CD8-positive, alpha-beta T cell (primary cell): ENCODE measurements at regions of chr14 and their contacts with region 1.

Region 1: GRCh38 chr14:24605435-24606190 is 3.9 kb downstream of the GZMH start:
- DNase-seq: peak; percentile 41 to 77 (median 64)
- ATAC-seq: peak; percentile 79
- H3K4me3 ChIP-seq: peak overlapping the region in 1 of 2 experiments; percentile 19
- H3K4me3 Mint-ChIP-seq: no peak overlapping the region
- H3K27ac ChIP-seq: peak overlapping the region in 1 of 2 experiments; percentile 71
- H3K27ac Mint-ChIP-seq: peak overlapping the region; percentile 88
- H3K4me1 ChIP-seq: peaks cover 5% of the 10 kb centered on the region
- H3K4me1 Mint-ChIP-seq: peaks cover 35% of the 10 kb centered on the region
- H3K27me3 ChIP-seq: no peaks in the 10 kb centered on the region
- H3K27me3 Mint-ChIP-seq: peaks cover 7% of the 10 kb centered on the region
- CTCF ChIP-seq: peak; percentile 87

Region 2: DNA sequence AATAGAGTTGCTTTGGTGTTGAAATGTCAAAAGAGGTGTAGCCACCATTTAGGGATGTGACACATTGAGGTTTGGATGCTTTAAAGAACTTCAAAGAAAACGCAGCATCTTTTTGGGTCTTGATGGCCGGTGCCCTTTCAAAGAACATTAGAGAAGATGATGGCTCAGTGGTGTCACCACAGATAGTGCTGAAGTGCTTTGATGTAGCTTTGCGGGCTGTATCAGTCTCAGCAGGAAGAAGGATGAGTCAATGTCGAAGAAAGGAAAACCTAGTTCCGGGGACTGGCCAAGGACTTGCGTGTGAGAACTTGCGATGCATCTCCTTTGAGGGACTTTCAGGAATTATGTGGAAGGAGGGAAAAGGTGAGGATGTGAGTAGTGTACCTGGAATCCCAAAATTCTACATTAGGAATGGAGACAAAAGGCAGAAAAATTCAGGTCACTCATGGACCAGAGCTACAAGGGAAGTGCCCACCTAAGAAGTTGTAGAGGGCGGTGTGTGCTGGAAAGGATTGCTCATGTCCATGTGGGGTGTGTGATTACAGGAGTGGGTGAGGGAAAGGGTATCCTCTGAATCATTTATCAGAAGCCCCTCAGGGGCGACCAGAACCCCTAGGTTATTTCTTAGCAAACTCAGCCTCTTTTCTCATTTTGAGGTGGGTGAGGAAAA is 68.1 kb after region 1 on chr14:
- CTCF ChIA-PET with region 1: interaction called, 12 read pairs
- POLR2A ChIA-PET with region 1: interaction called, 3 read pairs
- intact Hi-C with region 1: no loop called
- DNase-seq: peak; percentile 28 to 93 (median 63)
- ATAC-seq: peak; percentile 73
- H3K4me3 ChIP-seq: peak overlapping the region; percentile 21 to 27
- H3K4me3 Mint-ChIP-seq: peak overlapping the region; percentile 75
- H3K27ac ChIP-seq: peak overlapping the region; percentile 27 to 83
- H3K27ac Mint-ChIP-seq: peak overlapping the region; percentile 94
- H3K4me1 ChIP-seq: peaks cover 34% of the 10 kb centered on the region
- H3K4me1 Mint-ChIP-seq: peaks cover 58% of the 10 kb centered on the region
- H3K27me3 ChIP-seq: no peaks in the 10 kb centered on the region
- H3K27me3 Mint-ChIP-seq: no peaks in the 10 kb centered on the region
- CTCF ChIP-seq: no peak

Region 3: DNA sequence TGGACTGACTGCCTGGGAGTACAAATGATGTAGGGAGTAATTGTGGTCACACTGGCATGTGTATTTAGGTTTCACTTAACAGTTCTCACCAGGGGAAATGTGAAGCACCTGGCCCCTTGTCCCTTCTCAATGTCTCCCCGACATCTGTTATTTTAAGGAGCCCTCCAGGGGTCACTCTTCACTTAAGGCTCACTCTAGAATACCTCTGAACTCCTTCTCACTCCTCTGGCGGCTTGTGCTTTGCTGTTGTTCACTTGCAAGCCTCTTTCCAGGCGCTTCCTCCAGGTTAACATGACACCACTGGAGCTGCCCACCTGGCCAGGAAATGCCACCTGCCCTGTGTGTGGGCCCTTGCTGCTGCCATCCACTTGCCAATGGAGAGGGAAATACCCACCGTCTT is 84.9 kb after region 1 on chr14:
- CTCF ChIA-PET with region 1: interaction called, 5 read pairs
- POLR2A ChIA-PET with region 1: no interaction called
- intact Hi-C with region 1: loop called in 1 of 2 experiments (anchors 5 kb)
- DNase-seq: peak in 2 of 9 experiments; percentile 51 to 66
- ATAC-seq: no peak
- H3K4me3 ChIP-seq: no peak overlapping the region
- H3K4me3 Mint-ChIP-seq: no peak overlapping the region
- H3K27ac ChIP-seq: peak overlapping the region in 1 of 2 experiments; percentile 1
- H3K27ac Mint-ChIP-seq: no peak overlapping the region
- H3K4me1 ChIP-seq: peaks cover 44% of the 10 kb centered on the region
- H3K4me1 Mint-ChIP-seq: peaks cover 24% of the 10 kb centered on the region
- H3K27me3 ChIP-seq: no peaks in the 10 kb centered on the region
- H3K27me3 Mint-ChIP-seq: no peaks in the 10 kb centered on the region
- CTCF ChIP-seq: no peak

Region 4: DNA sequence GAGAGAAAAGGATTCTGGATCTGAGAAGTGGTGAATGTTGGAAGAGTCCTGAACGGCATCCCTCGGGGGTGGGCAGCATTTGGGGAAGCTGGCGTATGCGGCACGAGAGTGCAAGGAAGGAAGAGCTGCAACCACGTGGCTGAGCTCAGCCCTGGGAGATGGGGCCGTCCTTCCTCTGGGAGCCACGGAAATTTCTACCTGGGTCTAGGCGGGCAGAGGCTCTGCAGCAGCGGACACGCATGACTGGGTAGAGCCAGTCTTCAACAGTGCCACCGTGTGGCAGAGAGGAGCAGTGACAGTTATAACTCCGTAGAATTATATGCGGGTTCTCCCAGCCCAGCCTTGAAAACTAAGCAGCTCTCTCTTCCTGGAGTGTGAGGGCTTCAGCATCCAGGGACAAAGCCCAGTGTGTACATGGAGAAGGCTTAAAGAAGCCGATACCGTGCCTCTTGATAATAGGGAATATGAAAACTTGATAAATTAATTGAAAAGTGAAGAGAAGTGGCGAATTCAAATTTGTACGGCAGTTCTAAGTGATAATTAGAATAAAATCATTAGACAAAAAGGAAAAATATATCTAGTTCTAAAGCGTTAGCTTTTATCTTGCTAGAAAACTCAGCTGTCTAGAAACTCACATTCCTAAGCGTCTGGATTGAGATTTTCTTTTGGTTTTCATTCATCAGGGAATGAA is 527.3 kb after region 1 on chr14:
- CTCF ChIA-PET with region 1: interaction called, 3 read pairs
- POLR2A ChIA-PET with region 1: no interaction called
- intact Hi-C with region 1: loop called (anchors 5 to 10 kb)
- DNase-seq: peak; percentile 4 to 74 (median 29)
- ATAC-seq: peak; percentile 71
- H3K4me3 ChIP-seq: no peak overlapping the region
- H3K4me3 Mint-ChIP-seq: no peak overlapping the region
- H3K27ac ChIP-seq: no peak overlapping the region
- H3K27ac Mint-ChIP-seq: no peak overlapping the region
- H3K4me1 ChIP-seq: no peaks in the 10 kb centered on the region
- H3K4me1 Mint-ChIP-seq: no peaks in the 10 kb centered on the region
- H3K27me3 ChIP-seq: peaks cover 0 to 7% of the 10 kb centered on the region in 2 experiments
- H3K27me3 Mint-ChIP-seq: peaks cover 41% of the 10 kb centered on the region
- CTCF ChIP-seq: peak; percentile 60

Region 5: GRCh38 chr14:25150934-25151790 is 545.5 kb after region 1 on chr14:
- CTCF ChIA-PET with region 1: no interaction called
- POLR2A ChIA-PET with region 1: no interaction called
- intact Hi-C with region 1: loop called (anchors 5 kb)
- DNase-seq: peak in 2 of 9 experiments; percentile 30 to 54
- ATAC-seq: no peak
- H3K4me3 ChIP-seq: no peak overlapping the region
- H3K4me3 Mint-ChIP-seq: no peak overlapping the region
- H3K27ac ChIP-seq: no peak overlapping the region
- H3K27ac Mint-ChIP-seq: no peak overlapping the region
- H3K4me1 ChIP-seq: no peaks in the 10 kb centered on the region
- H3K4me1 Mint-ChIP-seq: no peaks in the 10 kb centered on the region
- H3K27me3 ChIP-seq: no peaks in the 10 kb centered on the region
- H3K27me3 Mint-ChIP-seq: peaks cover 15% of the 10 kb centered on the region
- CTCF ChIP-seq: peak; percentile 89